ENCODE measurements at regions of chr5 and their contacts with region 1.

Region 1: DNA sequence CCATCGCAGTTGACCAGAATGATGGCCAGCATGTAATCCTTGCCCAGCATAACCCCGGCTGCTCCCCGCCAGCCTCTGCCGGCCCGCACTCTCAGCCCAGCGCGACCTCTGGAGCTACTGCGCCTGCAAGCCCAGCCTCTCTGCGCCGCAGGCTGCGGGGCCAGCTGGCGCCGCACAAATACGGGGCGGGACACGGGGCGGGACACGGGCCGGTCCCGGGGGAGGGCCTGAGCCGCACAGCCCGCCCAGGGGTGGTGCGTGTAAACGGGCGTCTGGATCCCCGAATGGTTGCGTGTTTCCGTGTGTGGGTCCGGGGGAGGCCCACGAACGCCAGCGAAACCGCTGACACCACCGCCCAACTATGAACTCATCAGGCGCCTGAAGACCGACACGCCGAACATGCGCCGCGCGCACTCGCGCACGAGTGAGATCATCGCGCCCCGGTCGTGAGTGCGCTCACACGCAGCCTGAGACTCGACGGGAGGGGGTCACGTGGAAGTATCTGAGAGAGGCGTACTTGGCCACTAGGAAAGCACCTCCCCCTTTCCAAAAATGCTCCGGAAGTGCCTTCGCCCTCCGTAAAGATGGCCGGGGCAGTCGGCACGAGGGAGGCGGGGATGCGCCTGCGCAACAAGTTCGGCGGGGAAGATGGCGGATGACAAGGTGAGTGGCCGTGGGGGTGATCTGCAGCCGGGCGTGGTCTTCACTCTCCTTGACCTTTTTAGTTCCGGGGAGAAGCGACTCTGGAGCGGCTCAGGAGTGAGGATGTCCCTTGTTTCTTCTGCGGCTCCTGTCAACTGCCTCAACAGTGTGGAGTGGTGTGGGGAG is at the starts of genes APBB3 and SLC35A4:
- DNase-seq: peak; percentile 99
- H3K4me3 Mint-ChIP-seq: peak within 1 kb of the TSS; percentile 84
- H3K27ac Mint-ChIP-seq: peak within 1 kb of the TSS; percentile 95
- H3K4me1 Mint-ChIP-seq: peaks cover 22% of the 10 kb centered on the region
- H3K27me3 Mint-ChIP-seq: no peaks in the 10 kb centered on the region
- CTCF ChIP-seq: no peak
- total RNA-seq, gene APBB3: 22.7 and 28.1 TPM in 2 replicates
- total RNA-seq, gene SLC35A4: 84.0 and 119 TPM in 2 replicates

Region 2: DNA sequence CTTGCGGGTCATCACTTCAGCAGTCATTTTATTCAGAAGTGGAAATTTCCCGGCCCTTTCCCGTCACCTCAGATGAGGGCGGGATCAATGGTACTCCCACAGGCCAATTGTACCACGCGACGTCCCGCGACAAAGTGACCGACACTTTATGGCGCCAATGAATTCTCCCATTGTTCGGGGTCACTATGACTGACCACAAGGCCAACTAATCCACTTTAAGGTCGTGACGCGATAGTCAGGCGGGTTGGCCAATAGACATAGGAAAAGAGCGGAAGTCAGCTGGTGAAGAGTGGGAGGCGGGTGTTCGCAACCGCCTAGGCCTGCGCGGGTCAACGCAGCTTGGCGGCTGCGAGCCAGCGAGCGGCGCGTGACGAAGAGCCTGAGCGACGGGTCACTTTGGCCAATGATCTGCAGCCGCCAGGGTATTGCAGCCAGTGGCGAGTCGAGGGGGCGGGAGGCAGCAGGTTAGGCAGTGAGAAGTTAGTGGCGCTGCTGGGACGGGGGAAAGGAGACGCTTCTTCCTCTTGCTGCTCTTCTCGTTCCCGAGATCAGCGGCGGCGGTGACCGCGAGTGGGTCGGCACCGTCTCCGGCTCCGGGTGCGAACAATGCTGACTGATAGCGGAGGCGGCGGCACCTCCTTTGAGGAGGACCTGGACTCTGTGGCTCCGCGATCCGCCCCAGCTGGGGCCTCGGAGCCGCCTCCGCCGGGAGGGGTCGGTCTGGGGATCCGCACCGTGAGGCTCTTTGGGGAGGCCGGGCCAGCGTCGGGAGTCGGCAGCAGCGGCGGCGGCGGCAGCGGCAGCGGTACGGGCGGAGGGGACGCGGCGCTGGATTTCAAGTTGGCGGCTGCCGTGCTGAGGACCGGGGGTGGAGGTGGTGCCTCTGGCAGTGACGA is 162.8 kb before region 1 on chr5 and contains the start of gene ANKHD1:
- CTCF ChIA-PET with region 1: interaction called, 4 read pairs
- POLR2A ChIA-PET with region 1: interaction called, 28 read pairs
- intact Hi-C with region 1: no loop called
- DNase-seq: peak; percentile 100
- H3K4me3 Mint-ChIP-seq: no peak within 1 kb of the TSS
- H3K27ac Mint-ChIP-seq: no peak within 1 kb of the TSS
- H3K4me1 Mint-ChIP-seq: peaks cover 19% of the 10 kb centered on the region
- H3K27me3 Mint-ChIP-seq: no peaks in the 10 kb centered on the region
- CTCF ChIP-seq: no peak
- total RNA-seq, gene ANKHD1: 142 and 146 TPM in 2 replicates

Region 3: GRCh38 chr5:140509898-140510297 is 54.5 kb before region 1 on chr5:
- CTCF ChIA-PET with region 1: no interaction called
- POLR2A ChIA-PET with region 1: no interaction called
- intact Hi-C with region 1: no loop called
- DNase-seq: no peak
- H3K4me3 Mint-ChIP-seq: no peak overlapping the region
- H3K27ac Mint-ChIP-seq: no peak overlapping the region
- H3K4me1 Mint-ChIP-seq: no peaks in the 10 kb centered on the region
- H3K27me3 Mint-ChIP-seq: no peaks in the 10 kb centered on the region
- CTCF ChIP-seq: no peak

Region 4: GRCh38 chr5:140575309-140575708 is 10.9 kb after region 1 on chr5:
- CTCF ChIA-PET with region 1: interaction called, 12 read pairs
- POLR2A ChIA-PET with region 1: interaction called, 15 read pairs
- intact Hi-C with region 1: no loop called
- DNase-seq: peak; percentile 92
- H3K4me3 Mint-ChIP-seq: no peak overlapping the region
- H3K27ac Mint-ChIP-seq: no peak overlapping the region
- H3K4me1 Mint-ChIP-seq: no peaks in the 10 kb centered on the region
- H3K27me3 Mint-ChIP-seq: no peaks in the 10 kb centered on the region
- CTCF ChIP-seq: peak; percentile 82

Region 5: DNA sequence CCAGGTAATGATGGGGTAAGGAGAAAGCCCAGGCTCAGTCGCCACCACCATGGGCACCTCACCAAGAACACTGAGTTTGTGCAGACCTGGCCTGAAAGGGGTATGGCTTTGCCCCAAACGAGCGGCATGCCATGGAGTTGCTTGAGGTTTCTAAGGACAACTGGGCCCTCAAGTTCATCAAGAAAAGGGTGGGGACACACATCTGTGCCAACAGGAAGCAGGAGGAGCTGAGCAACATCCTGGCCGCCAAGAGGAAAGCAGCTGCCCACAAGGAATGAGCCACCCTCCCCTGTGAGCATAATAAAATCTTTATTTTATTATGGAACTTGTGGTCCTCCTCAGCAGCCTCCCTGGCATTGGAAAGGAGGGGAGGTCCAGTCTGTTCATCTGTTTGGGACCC is 44.7 kb after region 1 on chr5:
- CTCF ChIA-PET with region 1: no interaction called
- POLR2A ChIA-PET with region 1: interaction called, 19 read pairs
- intact Hi-C with region 1: no loop called
- DNase-seq: peak; percentile 77
- H3K4me3 Mint-ChIP-seq: no peak overlapping the region
- H3K27ac Mint-ChIP-seq: peak overlapping the region; percentile 32
- H3K4me1 Mint-ChIP-seq: peaks cover 29% of the 10 kb centered on the region
- H3K27me3 Mint-ChIP-seq: no peaks in the 10 kb centered on the region
- CTCF ChIP-seq: no peak

Region 6: DNA sequence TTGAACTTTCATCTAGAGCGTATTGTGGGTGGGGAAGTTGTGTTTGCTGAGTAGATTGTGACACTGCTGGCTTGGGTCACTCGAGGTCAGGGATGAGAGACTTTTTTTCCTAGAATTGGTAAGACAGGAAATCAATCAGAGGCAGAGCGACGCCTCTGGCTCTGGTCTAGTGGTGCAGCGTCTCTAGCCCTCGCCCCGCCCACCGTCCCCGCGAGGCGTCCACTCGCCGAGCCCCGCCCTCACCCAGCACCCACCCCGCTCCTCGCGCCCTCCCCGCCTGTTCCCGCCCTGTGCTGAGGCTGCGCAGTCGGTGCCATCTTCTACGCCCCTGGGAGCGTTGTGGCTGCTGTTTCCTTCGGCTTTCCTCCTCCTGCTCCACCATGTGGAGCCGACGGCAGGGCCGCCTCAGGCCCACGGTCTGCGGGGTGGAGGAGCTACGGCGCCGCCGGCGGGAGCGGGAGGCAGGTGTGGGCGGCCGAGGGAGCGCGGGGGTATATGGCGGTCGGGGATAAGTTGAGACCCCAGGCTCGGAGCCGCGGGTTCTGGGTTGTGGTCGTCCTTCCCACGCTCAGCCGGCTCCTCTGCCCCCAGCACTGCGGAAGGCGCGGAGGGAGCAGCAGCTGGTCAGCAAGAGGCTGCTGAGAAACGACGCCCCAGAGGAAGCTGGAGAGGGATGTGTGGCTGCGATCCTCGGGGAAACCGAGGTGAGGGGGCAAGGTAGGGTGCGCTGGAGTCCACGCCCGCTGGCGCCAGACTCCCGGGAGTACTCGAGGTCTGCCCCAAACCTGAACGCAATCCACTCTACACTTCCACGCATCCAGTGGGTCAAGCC is 75.0 kb after region 1 on chr5 and contains the start of gene TMCO6:
- CTCF ChIA-PET with region 1: interaction called, 28 read pairs
- POLR2A ChIA-PET with region 1: interaction called, 169 read pairs
- intact Hi-C with region 1: loop called (anchors 1 kb)
- DNase-seq: peak; percentile 99
- H3K4me3 Mint-ChIP-seq: peak within 1 kb of the TSS; percentile 83
- H3K27ac Mint-ChIP-seq: peak within 1 kb of the TSS; percentile 92
- H3K4me1 Mint-ChIP-seq: peaks cover 36% of the 10 kb centered on the region
- H3K27me3 Mint-ChIP-seq: no peaks in the 10 kb centered on the region
- CTCF ChIP-seq: peak; percentile 78
- total RNA-seq, gene TMCO6: 15.7 and 17.2 TPM in 2 replicates